HepG2 (cell line): ENCODE measurements at regions of chr1 and their contacts with region 1.

Region 1: DNA sequence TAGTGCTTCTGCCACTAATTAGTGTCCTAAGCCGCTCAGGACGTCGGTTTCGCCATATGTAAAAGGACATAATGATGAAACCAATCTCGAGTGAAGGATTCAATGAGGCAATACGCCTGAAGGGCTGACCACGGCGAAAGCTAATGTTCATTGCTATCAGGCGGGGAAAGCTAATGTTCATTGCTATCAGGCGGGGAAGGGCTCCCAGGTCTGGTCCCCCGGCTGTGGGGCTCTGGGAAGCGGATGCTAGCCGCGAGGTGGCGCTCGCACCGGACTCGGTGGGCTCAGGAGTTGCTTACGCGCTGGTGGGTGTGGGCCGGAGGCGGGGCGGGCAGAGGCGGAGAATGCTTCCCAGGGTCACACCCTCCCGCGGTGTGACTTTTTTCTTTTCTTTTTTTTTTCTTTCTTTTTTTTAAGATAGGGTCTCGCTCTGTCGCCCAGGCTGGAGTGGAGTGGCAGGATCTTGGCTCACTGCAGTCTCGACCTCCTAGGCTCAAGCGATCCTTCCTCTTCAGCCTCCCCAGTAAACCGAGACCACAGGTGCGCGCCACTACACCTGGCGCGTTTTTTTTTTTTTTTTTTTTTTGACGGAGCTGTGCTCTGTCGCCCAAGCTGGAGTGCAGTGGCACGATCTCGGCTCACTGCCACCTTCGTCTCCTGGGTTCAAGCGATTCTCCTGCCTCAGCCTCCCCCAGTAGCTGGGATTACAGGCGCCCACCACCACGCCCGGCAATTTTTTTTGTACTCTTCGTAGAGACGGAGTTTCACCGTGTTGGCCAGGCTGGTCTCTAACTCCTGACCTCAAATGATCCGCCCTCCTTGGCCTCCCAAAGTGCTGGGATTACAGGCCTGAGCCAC is 1.1 kb upstream of the PEAR1 start:
- DNase-seq: peak; percentile 64
- ATAC-seq: peak; percentile 95
- H3K4me3 ChIP-seq: 0 out of 6 replicates have a peak overlapping the region, but pooled peaks of 1 of the 3 experiments have one; percentile 11
- H3K27ac ChIP-seq: no peak overlapping the region
- H3K4me1 ChIP-seq: peaks cover 12% of the 10 kb centered on the region; the same call in 1 of the 2 replicates
- H3K27me3 ChIP-seq: peaks cover 4 to 68% of the 10 kb centered on the region in 2 experiments; a peak in 4 of 5 replicates
- CTCF ChIP-seq: peak; percentile 91
- EP300 ChIP-seq: no peak
- POLR2A ChIP-seq: no peak
- RAD21 ChIP-seq: peak; percentile 70

Region 2: GRCh38 chr1:156689035-156689952 is 203.1 kb before region 1 on chr1:
- CTCF ChIA-PET with region 1: interaction called, 10 read pairs
- POLR2A ChIA-PET with region 1: no interaction called
- in situ Hi-C with region 1: no loop called
- intact Hi-C with region 1: loop called (anchors 1 kb)
- DNase-seq: peak; percentile 75
- ATAC-seq: peak; percentile 93
- H3K4me3 ChIP-seq: peak overlapping the region; percentile 41 to 65 (median 43); a peak in 5 of 6 replicates
- H3K27ac ChIP-seq: no peak overlapping the region
- H3K4me1 ChIP-seq: peaks cover 40% of the 10 kb centered on the region
- H3K27me3 ChIP-seq: peaks cover 18 to 49% of the 10 kb centered on the region in 2 experiments; a peak in 4 of 5 replicates
- CTCF ChIP-seq: peak; percentile 98
- EP300 ChIP-seq: no peak
- POLR2A ChIP-seq: no peak
- RAD21 ChIP-seq: peak; percentile 87

Region 3: GRCh38 chr1:156797212-156797871 is 95.1 kb before region 1 on chr1:
- CTCF ChIA-PET with region 1: interaction called, 10 read pairs
- POLR2A ChIA-PET with region 1: no interaction called
- in situ Hi-C with region 1: no loop called
- intact Hi-C with region 1: no loop called
- DNase-seq: peak; percentile 55
- ATAC-seq: peak; percentile 53; the same call in 2 of the 3 replicates
- H3K4me3 ChIP-seq: no peak overlapping the region
- H3K27ac ChIP-seq: no peak overlapping the region
- H3K4me1 ChIP-seq: peaks cover 39% of the 10 kb centered on the region
- H3K27me3 ChIP-seq: no peaks in the 10 kb centered on the region
- CTCF ChIP-seq: peak; percentile 68
- EP300 ChIP-seq: no peak
- POLR2A ChIP-seq: no peak
- RAD21 ChIP-seq: 0 out of 2 replicates have a peak, but pooled peaks have one; percentile 25

Region 4: GRCh38 chr1:156838981-156839410 is 53.4 kb before region 1 on chr1:
- CTCF ChIA-PET with region 1: interaction called, 14 read pairs
- POLR2A ChIA-PET with region 1: no interaction called
- in situ Hi-C with region 1: no loop called
- intact Hi-C with region 1: loop called (anchors 1 kb)
- DNase-seq: no peak
- ATAC-seq: peak; percentile 69
- H3K4me3 ChIP-seq: no peak overlapping the region
- H3K27ac ChIP-seq: no peak overlapping the region
- H3K4me1 ChIP-seq: no peaks in the 10 kb centered on the region
- H3K27me3 ChIP-seq: peaks cover 1 to 58% of the 10 kb centered on the region in 2 experiments; a peak in 2 of 5 replicates
- CTCF ChIP-seq: peak; percentile 90
- EP300 ChIP-seq: no peak
- POLR2A ChIP-seq: no peak
- RAD21 ChIP-seq: peak; percentile 71

Region 5: DNA sequence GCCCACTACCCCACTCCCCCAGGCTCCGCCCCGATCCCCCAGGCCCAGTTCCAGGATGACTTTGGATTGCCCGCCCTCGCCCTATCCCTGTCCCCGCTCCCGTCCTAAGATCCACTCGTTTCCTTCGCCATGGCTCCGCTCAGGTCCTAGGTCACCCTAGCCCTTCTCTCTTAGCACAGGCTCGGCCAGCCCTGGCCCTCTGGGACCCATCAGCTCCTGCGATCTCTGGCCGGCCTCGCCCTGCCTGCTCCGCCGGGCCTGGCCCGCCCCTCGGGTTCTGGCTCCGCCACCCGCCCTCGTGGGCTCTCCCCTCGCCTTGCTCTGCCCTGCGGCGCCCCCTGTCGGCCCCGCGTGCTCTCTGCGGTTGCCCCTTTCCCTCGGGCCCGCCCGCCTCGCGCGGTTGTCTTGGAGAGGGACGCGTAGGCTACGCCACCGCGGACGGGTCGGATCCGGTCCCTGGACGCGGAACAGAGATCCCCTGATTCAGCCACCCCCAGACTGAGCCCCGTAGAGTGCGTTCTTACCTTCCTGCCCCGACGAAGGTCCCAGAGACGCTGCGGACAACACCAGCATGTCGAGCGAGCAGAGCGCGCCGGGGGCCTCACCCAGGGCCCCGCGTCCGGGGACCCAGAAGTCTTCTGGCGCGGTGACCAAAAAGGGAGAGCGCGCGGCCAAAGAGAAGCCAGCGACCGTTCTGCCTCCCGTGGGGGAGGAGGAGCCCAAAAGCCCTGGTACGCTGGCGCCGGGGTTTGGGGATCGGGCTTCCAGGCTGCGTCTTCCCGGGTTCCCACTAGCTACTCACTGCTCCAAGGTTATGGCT is 28.0 kb after region 1 on chr1 and contains the start of gene LRRC71:
- CTCF ChIA-PET with region 1: interaction called, 23 read pairs
- POLR2A ChIA-PET with region 1: no interaction called
- in situ Hi-C with region 1: loop called (anchors 5 kb)
- intact Hi-C with region 1: loop called (anchors 1 kb)
- DNase-seq: peak; percentile 59
- ATAC-seq: peak; percentile 94
- H3K4me3 ChIP-seq: peak within 1 kb of the TSS in 1 of 3 experiments; percentile 52; a peak in 1 of 6 replicates
- H3K27ac ChIP-seq: no peak within 1 kb of the TSS
- H3K4me1 ChIP-seq: peaks cover 9% of the 10 kb centered on the region; the same call in 1 of the 2 replicates
- H3K27me3 ChIP-seq: peaks cover 21 to 63% of the 10 kb centered on the region in 2 experiments
- CTCF ChIP-seq: peak; percentile 91
- EP300 ChIP-seq: no peak
- POLR2A ChIP-seq: no peak
- RAD21 ChIP-seq: peak; percentile 91
- total RNA-seq, gene LRRC71: not detected in 2 replicates

Region 6: GRCh38 chr1:156927215-156928042 is 35.0 kb after region 1 on chr1:
- CTCF ChIA-PET with region 1: interaction called, 14 read pairs
- POLR2A ChIA-PET with region 1: no interaction called
- in situ Hi-C with region 1: loop called (anchors 5 kb)
- intact Hi-C with region 1: loop called (anchors 1 kb)
- DNase-seq: peak; percentile 48
- ATAC-seq: peak; percentile 86
- H3K4me3 ChIP-seq: peak overlapping the region; percentile 16 to 65 (median 49); a peak in 3 of 6 replicates
- H3K27ac ChIP-seq: no peak overlapping the region
- H3K4me1 ChIP-seq: peaks cover 20% of the 10 kb centered on the region
- H3K27me3 ChIP-seq: peaks cover 19 to 77% of the 10 kb centered on the region in 2 experiments; a peak in 4 of 5 replicates
- CTCF ChIP-seq: peak; percentile 91
- EP300 ChIP-seq: no peak
- POLR2A ChIP-seq: no peak
- RAD21 ChIP-seq: peak; percentile 82

Region 7: GRCh38 chr1:157490467-157491165 is 598.2 kb after region 1 on chr1:
- CTCF ChIA-PET with region 1: no interaction called
- POLR2A ChIA-PET with region 1: no interaction called
- in situ Hi-C with region 1: no loop called
- intact Hi-C with region 1: no loop called
- DNase-seq: peak; percentile 43
- ATAC-seq: peak; percentile 79
- H3K4me3 ChIP-seq: no peak overlapping the region
- H3K27ac ChIP-seq: no peak overlapping the region
- H3K4me1 ChIP-seq: no peaks in the 10 kb centered on the region
- H3K27me3 ChIP-seq: no peaks in the 10 kb centered on the region
- CTCF ChIP-seq: peak; percentile 74
- EP300 ChIP-seq: no peak
- POLR2A ChIP-seq: no peak
- RAD21 ChIP-seq: peak; percentile 26; the same call in 1 of the 2 replicates